Natural killer cell (primary cell): ENCODE measurements at regions of chr11 and their contacts with region 1.

Region 1: DNA sequence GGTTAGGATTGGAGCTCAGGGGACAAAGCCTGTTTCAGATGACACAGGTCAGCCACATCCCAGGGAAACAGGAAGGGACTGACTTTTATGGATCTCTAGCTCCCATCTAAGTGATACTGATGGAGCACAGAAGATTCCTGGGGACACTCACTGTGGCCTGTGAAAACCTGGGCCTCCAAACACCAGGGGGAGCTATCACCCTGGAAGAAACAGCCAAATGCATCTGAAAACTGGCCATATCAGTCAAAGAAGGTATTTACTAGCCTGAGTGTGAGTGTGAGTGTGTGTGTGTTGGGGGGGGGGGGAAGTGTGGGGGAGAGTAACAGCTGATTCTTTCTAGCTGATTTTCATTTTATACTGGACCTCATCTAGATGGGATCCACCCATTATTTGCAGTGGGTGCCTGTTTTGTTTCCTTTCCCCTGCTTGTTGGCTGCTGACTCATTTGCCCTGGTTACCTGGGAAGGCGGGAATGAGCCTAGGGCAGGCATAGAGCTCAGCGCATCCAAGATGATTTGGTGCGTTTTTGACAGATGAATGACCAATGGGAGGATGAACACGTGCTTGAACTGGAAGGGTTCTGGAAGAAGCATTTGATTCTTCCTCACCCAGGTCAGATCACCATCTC is 284.0 kb downstream of the KIRREL3 start:
- DNase-seq: peak; percentile 39 to 52
- ATAC-seq: peak in 1 of 3 donors; percentile 63
- H3K4me3 ChIP-seq: no peak overlapping the region
- H3K4me3 Mint-ChIP-seq: no peak overlapping the region
- H3K27ac ChIP-seq: no peak overlapping the region
- H3K27ac Mint-ChIP-seq: no peak overlapping the region
- H3K4me1 ChIP-seq: peaks cover 3% of the 10 kb centered on the region
- H3K4me1 Mint-ChIP-seq: no peaks in the 10 kb centered on the region
- H3K27me3 ChIP-seq: no peaks in the 10 kb centered on the region
- H3K27me3 Mint-ChIP-seq: peaks cover 24 to 29% of the 10 kb centered on the region in 2 donors
- CTCF ChIP-seq: peak; percentile 58

Region 2: GRCh38 chr11:126862664-126863243 is 146.2 kb after region 1 on chr11:
- intact Hi-C with region 1: loop called (anchors 2 kb)
- DNase-seq: peak in 1 of 2 donors; percentile 31
- ATAC-seq: peak; percentile 31 to 85 (median 49)
- H3K4me3 ChIP-seq: no peak overlapping the region
- H3K4me3 Mint-ChIP-seq: no peak overlapping the region
- H3K27ac ChIP-seq: no peak overlapping the region
- H3K27ac Mint-ChIP-seq: peak overlapping the region in 1 of 2 donors; percentile 44
- H3K4me1 ChIP-seq: peaks cover 21% of the 10 kb centered on the region
- H3K4me1 Mint-ChIP-seq: peaks cover 5 to 14% of the 10 kb centered on the region in 2 donors
- H3K27me3 ChIP-seq: no peaks in the 10 kb centered on the region
- H3K27me3 Mint-ChIP-seq: peaks cover 9 to 12% of the 10 kb centered on the region in 2 donors
- CTCF ChIP-seq: no peak

Region 3: GRCh38 chr11:126989942-126990715 is 273.6 kb after region 1 on chr11:
- intact Hi-C with region 1: loop called (anchors 1 kb)
- DNase-seq: peak; percentile 56 to 62
- ATAC-seq: peak; percentile 64 to 90 (median 69)
- H3K4me3 ChIP-seq: no peak overlapping the region
- H3K4me3 Mint-ChIP-seq: no peak overlapping the region
- H3K27ac ChIP-seq: no peak overlapping the region
- H3K27ac Mint-ChIP-seq: no peak overlapping the region
- H3K4me1 ChIP-seq: no peaks in the 10 kb centered on the region
- H3K4me1 Mint-ChIP-seq: peaks cover 0 to 5% of the 10 kb centered on the region in 2 donors
- H3K27me3 ChIP-seq: no peaks in the 10 kb centered on the region
- H3K27me3 Mint-ChIP-seq: peaks cover 19 to 46% of the 10 kb centered on the region in 2 donors
- CTCF ChIP-seq: peak; percentile 78

Region 4: DNA sequence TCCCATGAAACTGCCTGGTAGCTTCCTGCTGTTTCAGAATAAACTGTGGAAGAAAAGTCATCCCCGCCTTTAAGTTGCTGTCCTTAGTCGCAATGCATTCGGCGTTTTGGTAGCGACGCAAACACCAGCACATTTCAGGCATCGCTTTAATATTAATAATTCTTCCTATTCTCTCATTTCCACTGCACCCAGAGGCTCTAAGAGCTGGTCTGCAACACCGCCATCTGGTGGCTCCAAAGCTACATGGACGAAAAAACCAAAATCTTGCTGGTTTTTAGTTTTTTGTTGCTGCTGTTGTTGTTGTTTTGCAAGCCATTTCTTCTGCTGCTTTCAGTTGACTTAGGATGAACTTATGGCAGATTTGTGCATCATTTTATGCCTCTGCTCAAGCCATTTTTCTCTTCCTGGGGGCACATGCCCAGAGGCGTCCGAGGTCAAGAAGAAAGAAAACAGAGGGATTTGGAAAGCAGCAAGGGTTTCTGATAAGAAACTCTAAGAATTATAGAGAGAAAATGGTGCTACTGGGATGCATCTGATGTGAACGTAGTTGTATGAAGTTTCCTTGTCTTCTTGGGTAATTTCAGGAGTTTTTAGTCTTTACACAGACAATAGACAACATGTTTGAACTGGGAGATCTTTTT is 629.4 kb after region 1 on chr11:
- intact Hi-C with region 1: loop called (anchors 10 kb)
- DNase-seq: peak in 1 of 2 donors; percentile 43
- ATAC-seq: no peak
- H3K4me3 ChIP-seq: no peak overlapping the region
- H3K4me3 Mint-ChIP-seq: no peak overlapping the region
- H3K27ac ChIP-seq: no peak overlapping the region
- H3K27ac Mint-ChIP-seq: no peak overlapping the region
- H3K4me1 ChIP-seq: no peaks in the 10 kb centered on the region
- H3K4me1 Mint-ChIP-seq: no peaks in the 10 kb centered on the region
- H3K27me3 ChIP-seq: no peaks in the 10 kb centered on the region
- H3K27me3 Mint-ChIP-seq: peaks cover 3 to 22% of the 10 kb centered on the region in 2 donors
- CTCF ChIP-seq: peak; percentile 34